Tibial artery (tissue), 4 donors: ENCODE measurements at regions of chr1 and their contacts with region 1.

Region 1: GRCh38 chr1:57721001-57721400 is 297.1 kb upstream of the DAB1 start:
- DNase-seq: no peak
- H3K4me3 ChIP-seq: no peak overlapping the region
- H3K27ac ChIP-seq: no peak overlapping the region
- H3K4me1 ChIP-seq: no peaks in the 10 kb centered on the region
- H3K27me3 ChIP-seq: no peaks in the 10 kb centered on the region
- CTCF ChIP-seq: no peak

Region 2: GRCh38 chr1:57468641-57469523 is 252.1 kb before region 1 on chr1:
- intact Hi-C with region 1: no loop called
- DNase-seq: no peak
- H3K4me3 ChIP-seq: no peak overlapping the region
- H3K27ac ChIP-seq: no peak overlapping the region
- H3K4me1 ChIP-seq: peaks cover 0 to 22% (median 2%) of the 10 kb centered on the region in 4 donors
- H3K27me3 ChIP-seq: no peaks in the 10 kb centered on the region
- CTCF ChIP-seq: no peak

Region 3: GRCh38 chr1:57736940-57737339 is 15.9 kb after region 1 on chr1:
- intact Hi-C with region 1: loop called (anchors 1 kb)
- DNase-seq: no peak
- H3K4me3 ChIP-seq: no peak overlapping the region
- H3K27ac ChIP-seq: no peak overlapping the region
- H3K4me1 ChIP-seq: no peaks in the 10 kb centered on the region
- H3K27me3 ChIP-seq: no peaks in the 10 kb centered on the region
- CTCF ChIP-seq: no peak